WTC11 (cell line): ENCODE measurements at regions of chr4 and their contacts with region 1.

Region 1: GRCh38 chr4:100738196-100739170 is 220.7 kb upstream of the EMCN start:
- DNase-seq: no peak
- ATAC-seq: no peak
- H3K4me3 Mint-ChIP-seq: no peak overlapping the region
- H3K27ac Mint-ChIP-seq: no peak overlapping the region
- H3K4me1 Mint-ChIP-seq: no peaks in the 10 kb centered on the region
- H3K27me3 Mint-ChIP-seq: no peaks in the 10 kb centered on the region
- CTCF ChIP-seq: no peak

Region 2: GRCh38 chr4:101252721-101253120 is 514.2 kb after region 1 on chr4:
- CTCF ChIA-PET with region 1: no interaction called
- POLR2A ChIA-PET with region 1: interaction called, 12 read pairs
- DNase-seq: no peak
- ATAC-seq: peak; percentile 56
- H3K4me3 Mint-ChIP-seq: no peak overlapping the region
- H3K27ac Mint-ChIP-seq: peak overlapping the region; percentile 70; the same call in 1 of the 2 replicates
- H3K4me1 Mint-ChIP-seq: peaks cover 31% of the 10 kb centered on the region
- H3K27me3 Mint-ChIP-seq: no peaks in the 10 kb centered on the region
- CTCF ChIP-seq: no peak